PC-3 (cell line): ENCODE measurements at regions of chr4 and their contacts with region 1.

Region 1: DNA sequence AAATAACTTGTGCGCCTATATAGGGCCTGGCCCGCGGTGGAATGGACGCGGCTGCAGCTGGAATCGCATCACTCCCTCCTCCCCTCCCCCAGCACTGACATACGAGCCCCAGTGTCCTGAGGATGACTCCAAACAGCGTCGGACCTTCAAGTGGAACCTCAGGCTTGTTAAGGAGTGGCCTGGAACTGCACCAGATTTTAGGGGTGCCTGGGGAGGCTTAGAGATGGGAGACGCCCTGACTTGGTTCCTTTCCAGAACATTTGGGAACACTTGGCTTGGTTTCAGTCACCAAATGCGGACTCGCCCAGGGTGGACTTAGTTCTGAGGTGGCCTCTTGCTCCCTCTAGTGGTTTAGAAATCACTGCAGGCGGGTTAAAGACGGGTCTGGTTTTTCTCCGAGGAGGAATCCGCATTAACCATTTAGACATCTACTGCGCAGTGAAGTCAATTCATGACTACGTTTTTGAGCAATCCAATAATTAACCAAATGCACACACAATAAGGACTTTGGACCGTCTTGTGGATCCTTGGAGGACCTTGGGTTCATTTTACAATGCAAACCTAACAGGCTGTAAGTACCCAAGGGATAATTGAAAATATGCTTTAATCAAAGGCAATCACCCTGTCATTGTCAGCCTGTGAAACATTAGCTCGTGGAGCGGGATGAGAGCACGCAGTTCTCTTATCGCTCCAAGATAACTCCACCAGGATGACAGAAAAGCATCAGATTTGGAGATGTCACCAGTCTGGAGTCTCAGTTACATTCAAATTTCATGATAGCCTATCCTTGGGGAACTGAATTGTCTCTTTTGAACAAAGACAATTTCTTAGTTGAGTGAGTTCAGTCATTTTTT is 11.2 kb upstream of the PDGFRA start:
- DNase-seq: peak; percentile 94
- ATAC-seq: peak; percentile 90
- H3K4me3 ChIP-seq: peak overlapping the region; percentile 70
- H3K27ac ChIP-seq: no peak overlapping the region
- H3K4me1 ChIP-seq: 0 out of 2 replicates have a peak, but pooled peaks cover 4% of the 10 kb centered on the region
- H3K27me3 ChIP-seq: no peaks in the 10 kb centered on the region
- CTCF ChIP-seq: peak; percentile 98

Region 2: GRCh38 chr4:53855581-53856250 is 362.2 kb before region 1 on chr4:
- CTCF ChIA-PET with region 1: no interaction called
- POLR2A ChIA-PET with region 1: no interaction called
- intact Hi-C with region 1: no loop called
- DNase-seq: peak; percentile 89
- ATAC-seq: peak; percentile 89
- H3K4me3 ChIP-seq: peak overlapping the region; percentile 21
- H3K27ac ChIP-seq: peak overlapping the region; percentile 88
- H3K4me1 ChIP-seq: peaks cover 28% of the 10 kb centered on the region
- H3K27me3 ChIP-seq: no peaks in the 10 kb centered on the region
- CTCF ChIP-seq: no peak

Region 3: DNA sequence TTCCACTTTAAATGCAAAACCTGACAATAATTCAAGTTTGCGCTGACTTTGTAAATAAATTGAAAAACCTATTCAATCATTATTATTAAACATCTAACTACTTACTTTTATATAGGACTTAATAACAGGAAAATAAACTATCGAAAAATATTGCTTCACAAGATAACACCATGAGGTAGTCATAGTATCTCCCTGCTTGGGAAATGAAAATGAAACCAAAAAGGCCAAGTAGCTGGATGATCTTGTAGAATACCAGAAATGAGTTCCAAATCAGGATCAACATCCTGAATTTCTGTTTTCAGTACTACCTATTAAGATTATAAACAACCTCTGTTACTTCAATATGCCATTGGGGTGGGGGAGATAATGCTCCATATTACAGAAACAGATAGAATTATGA is 212.4 kb before region 1 on chr4:
- CTCF ChIA-PET with region 1: no interaction called
- POLR2A ChIA-PET with region 1: no interaction called
- intact Hi-C with region 1: loop called (anchors 5 kb)
- DNase-seq: no peak
- ATAC-seq: no peak
- H3K4me3 ChIP-seq: no peak overlapping the region
- H3K27ac ChIP-seq: no peak overlapping the region
- H3K4me1 ChIP-seq: peaks cover 7% of the 10 kb centered on the region; the same call in 1 of the 2 replicates
- H3K27me3 ChIP-seq: no peaks in the 10 kb centered on the region
- CTCF ChIP-seq: no peak

Region 4: GRCh38 chr4:54091637-54092404 is 126.0 kb before region 1 on chr4:
- CTCF ChIA-PET with region 1: interaction called, 3 read pairs
- POLR2A ChIA-PET with region 1: no interaction called
- intact Hi-C with region 1: loop called (anchors 5 kb)
- DNase-seq: peak; percentile 73
- ATAC-seq: peak; percentile 85
- H3K4me3 ChIP-seq: peak overlapping the region; percentile 76
- H3K27ac ChIP-seq: no peak overlapping the region
- H3K4me1 ChIP-seq: peaks cover 10% of the 10 kb centered on the region; the same call in 1 of the 2 replicates
- H3K27me3 ChIP-seq: 0 out of 2 replicates have a peak, but pooled peaks cover 1% of the 10 kb centered on the region
- CTCF ChIP-seq: no peak